ENCODE measurements at regions of chr11 and their contacts with region 1.

Region 1: DNA sequence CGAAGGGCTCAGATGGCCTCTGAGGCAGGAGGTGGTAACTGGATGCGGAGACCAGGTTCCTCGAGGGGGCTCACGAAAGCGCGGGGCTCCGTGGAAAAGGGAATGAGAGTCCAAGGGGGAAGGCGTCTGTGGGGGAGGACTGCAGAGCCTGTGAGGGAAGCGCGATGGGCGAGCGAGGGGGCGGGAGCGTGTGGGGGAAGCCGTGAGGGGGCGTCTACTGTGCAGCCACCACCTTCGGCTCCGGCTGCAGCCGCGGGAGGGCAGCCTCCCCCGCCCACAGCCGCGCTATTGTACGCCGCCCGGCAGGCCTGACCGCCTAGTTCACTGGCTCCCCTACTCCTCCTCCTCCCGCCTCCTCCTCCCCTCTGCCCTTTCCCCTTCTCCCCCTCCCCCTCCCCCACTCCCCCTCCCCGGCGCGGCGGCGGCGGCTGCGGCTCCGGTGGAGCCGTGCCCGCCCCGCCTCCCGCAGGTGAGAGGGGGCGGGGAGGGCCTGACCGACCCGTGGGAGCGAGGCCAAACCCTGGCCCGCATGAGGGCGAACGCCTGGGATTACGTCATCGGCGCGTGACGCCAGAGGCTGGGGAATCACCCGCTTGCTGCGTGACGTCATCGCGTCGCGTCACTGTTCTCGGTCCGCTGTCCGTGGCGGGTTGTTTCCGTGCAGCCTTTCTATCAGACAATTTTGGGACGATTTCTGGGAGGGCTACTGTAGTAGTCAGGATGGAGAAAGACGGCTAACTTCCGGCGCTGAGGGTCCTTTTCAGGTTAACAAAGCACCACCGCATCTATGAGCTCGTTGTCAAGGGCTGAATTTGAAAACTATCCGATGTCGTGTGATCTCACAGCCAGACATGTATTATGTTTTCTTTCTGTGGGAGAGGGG is at the start of gene PAK1:
- DNase-seq: peak; percentile 79 to 96 (median 85)
- ATAC-seq: peak; percentile 89
- H3K4me3 ChIP-seq: peak within 1 kb of the TSS; percentile 43
- H3K4me3 Mint-ChIP-seq: peak within 1 kb of the TSS; percentile 85 to 99 (median 92)
- H3K27ac ChIP-seq: peak within 1 kb of the TSS; percentile 75
- H3K27ac Mint-ChIP-seq: peak within 1 kb of the TSS; percentile 87 to 100 (median 96)
- H3K4me1 ChIP-seq: no peaks in the 10 kb centered on the region
- H3K4me1 Mint-ChIP-seq: peaks cover 12 to 29% (median 23%) of the 10 kb centered on the region in 7 donors
- H3K27me3 ChIP-seq: no peaks in the 10 kb centered on the region
- H3K27me3 Mint-ChIP-seq: peaks cover 0 to 37% (median 0%) of the 10 kb centered on the region in 5 donors
- total RNA-seq, gene PAK1: 18.9 to 67.2 (median 23.3) TPM

Region 2: DNA sequence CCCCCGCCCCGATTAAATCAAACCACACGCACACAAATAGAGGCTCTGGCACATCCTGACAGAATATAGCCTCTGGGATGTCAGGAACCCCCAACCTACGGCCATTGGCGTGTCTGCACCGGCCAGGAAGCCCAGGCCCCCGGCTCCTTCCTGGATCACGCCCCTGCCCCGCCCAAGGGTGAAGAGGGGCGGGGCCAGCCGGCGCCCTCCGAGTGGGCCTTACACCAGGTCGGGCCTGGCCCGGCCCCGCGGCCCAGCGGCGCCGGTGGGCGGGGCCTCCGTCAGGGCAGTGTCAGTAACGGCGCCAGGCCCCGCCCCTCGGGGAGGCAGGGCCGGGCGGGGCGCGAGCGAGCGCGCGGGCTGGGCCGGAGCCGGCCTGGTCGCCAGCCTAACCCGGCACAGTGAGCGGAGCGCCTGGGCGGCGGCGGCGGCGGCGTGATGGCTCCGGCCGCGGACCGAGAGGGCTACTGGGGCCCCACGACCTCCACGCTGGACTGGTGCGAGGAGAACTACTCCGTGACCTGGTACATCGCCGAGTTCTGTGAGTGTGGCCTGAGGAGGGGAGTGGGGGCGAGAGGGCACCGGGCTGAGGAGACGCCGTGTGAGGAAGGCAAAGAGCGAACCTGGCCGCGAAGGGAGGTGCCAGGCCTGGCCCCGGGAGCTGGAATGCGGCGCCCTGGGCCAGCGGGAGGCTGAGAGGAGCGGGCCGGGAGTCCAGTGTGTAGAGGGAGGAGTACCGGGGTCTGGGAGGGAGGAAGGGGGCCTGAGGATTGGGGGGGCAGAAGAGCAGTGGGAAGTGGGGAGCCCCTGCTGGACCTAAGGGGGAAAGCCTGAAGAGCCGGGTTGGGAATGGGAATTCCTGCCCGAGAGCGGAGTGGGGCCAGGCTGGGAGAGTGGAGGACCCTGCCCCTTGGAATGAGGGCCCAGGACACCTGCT is 613.2 kb before region 1 on chr11 and contains the start of gene ACER3:
- CTCF ChIA-PET with region 1: no interaction called
- POLR2A ChIA-PET with region 1: no interaction called
- intact Hi-C with region 1: loop called in 1 of 2 experiments (anchors 5 kb)
- DNase-seq: peak; percentile 36 to 95 (median 61)
- ATAC-seq: peak; percentile 98
- H3K4me3 ChIP-seq: peak within 1 kb of the TSS; percentile 57
- H3K4me3 Mint-ChIP-seq: peak within 1 kb of the TSS; percentile 80 to 92 (median 88)
- H3K27ac ChIP-seq: peak within 1 kb of the TSS; percentile 72
- H3K27ac Mint-ChIP-seq: peak within 1 kb of the TSS; percentile 73 to 95 (median 85)
- H3K4me1 ChIP-seq: peaks cover 9 to 11% of the 10 kb centered on the region in 2 donors
- H3K4me1 Mint-ChIP-seq: peaks cover 19 to 36% (median 28%) of the 10 kb centered on the region in 7 donors
- H3K27me3 ChIP-seq: no peaks in the 10 kb centered on the region
- H3K27me3 Mint-ChIP-seq: no peaks in the 10 kb centered on the region
- total RNA-seq, gene ACER3: 4.7 to 15.2 (median 9.0) TPM

Region 3: DNA sequence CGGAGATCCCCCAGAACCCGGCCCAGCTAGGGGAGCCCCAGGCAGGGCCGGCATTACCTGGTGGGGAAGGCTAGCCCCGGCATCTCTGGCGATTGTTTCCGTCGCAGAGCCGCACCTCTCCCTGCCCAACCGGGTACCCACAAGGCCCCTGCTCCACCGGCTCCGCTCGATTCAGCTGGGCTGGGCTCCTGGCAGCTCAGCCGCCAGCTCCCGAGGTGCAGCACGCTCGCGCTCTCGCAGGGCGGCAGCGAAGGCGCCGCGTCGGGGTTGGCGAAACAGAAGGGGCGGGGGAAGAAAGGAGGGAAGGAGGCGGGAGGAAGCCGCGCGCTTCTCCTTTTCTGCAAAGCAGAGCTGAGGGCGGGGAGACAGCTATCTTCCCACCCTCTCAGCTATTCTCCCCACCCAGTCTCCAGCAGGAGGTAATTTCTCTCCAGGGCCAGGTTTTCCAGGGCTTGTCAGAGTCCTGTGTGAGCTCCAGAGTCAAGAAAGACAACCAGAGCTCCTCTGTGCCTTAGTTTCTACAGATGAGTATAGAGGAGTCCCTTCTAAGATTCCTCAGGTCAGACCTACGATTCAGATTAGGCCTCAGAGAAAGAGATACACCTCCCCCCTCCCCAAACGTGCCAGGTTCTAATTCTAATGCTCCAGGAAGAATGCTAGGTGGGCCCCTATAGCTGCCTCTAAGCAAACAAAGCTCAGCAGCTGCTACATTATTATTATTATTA is 62.2 kb before region 1 on chr11:
- CTCF ChIA-PET with region 1: interaction called, 5 read pairs
- POLR2A ChIA-PET with region 1: interaction called, 5 read pairs
- intact Hi-C with region 1: loop called (anchors 1 kb)
- DNase-seq: peak; percentile 64 to 82 (median 78)
- ATAC-seq: peak; percentile 96
- H3K4me3 ChIP-seq: peak overlapping the region; percentile 88
- H3K4me3 Mint-ChIP-seq: peak overlapping the region; percentile 88 to 98 (median 94)
- H3K27ac ChIP-seq: peak overlapping the region; percentile 66
- H3K27ac Mint-ChIP-seq: peak overlapping the region; percentile 65 to 94 (median 82)
- H3K4me1 ChIP-seq: peaks cover 14 to 19% of the 10 kb centered on the region in 2 donors
- H3K4me1 Mint-ChIP-seq: peaks cover 33 to 54% (median 39%) of the 10 kb centered on the region in 7 donors
- H3K27me3 ChIP-seq: no peaks in the 10 kb centered on the region
- H3K27me3 Mint-ChIP-seq: no peaks in the 10 kb centered on the region

Region 4: GRCh38 chr11:77450227-77450626 is 23.8 kb before region 1 on chr11:
- CTCF ChIA-PET with region 1: interaction called, 6 read pairs
- POLR2A ChIA-PET with region 1: no interaction called
- intact Hi-C with region 1: loop called in 1 of 2 experiments (anchors 1 kb)
- DNase-seq: no peak
- ATAC-seq: no peak
- H3K4me3 ChIP-seq: no peak overlapping the region
- H3K4me3 Mint-ChIP-seq: no peak overlapping the region
- H3K27ac ChIP-seq: no peak overlapping the region
- H3K27ac Mint-ChIP-seq: no peak overlapping the region
- H3K4me1 ChIP-seq: peaks cover 0 to 9% of the 10 kb centered on the region in 2 donors
- H3K4me1 Mint-ChIP-seq: peaks cover 20 to 41% (median 34%) of the 10 kb centered on the region in 7 donors
- H3K27me3 ChIP-seq: no peaks in the 10 kb centered on the region
- H3K27me3 Mint-ChIP-seq: peaks cover 0 to 2% (median 0%) of the 10 kb centered on the region in 5 donors

Region 5: DNA sequence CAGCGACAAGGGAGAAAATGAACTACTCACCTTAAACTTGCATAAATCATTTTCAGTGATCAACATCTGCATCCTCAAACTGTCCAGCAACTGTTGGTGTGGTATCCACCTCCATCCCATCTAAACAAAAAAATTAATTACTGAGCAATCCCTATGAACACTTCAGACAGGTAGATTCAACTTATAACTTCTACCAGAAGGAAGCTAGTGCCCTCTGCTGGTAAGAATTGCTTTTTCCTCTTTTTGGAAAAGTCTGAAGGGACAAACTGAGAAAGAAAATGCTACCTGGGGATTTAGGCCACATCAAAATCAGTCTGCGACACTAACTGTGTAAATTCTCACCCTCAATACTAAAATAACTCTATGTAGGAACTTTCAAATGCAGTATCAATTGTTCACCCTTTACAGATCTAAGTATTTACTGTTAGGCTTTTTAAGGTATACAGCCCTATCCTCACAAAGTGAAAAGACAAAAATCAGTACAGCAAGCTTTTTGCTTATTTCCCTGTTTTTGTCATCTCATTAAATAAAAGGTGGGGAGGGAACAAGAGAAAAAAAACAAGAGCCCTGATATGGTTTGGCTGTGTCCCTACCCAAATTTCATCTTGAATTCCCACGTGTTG is 145.6 kb after region 1 on chr11:
- CTCF ChIA-PET with region 1: interaction called, 3 read pairs
- POLR2A ChIA-PET with region 1: no interaction called
- intact Hi-C with region 1: loop called in 1 of 2 experiments (anchors 5 kb)
- DNase-seq: peak in 7 of 9 donors; percentile 18 to 51 (median 41)
- ATAC-seq: peak; percentile 57
- H3K4me3 ChIP-seq: no peak overlapping the region
- H3K4me3 Mint-ChIP-seq: no peak overlapping the region
- H3K27ac ChIP-seq: no peak overlapping the region
- H3K27ac Mint-ChIP-seq: peak overlapping the region in 1 of 9 donors; percentile 75
- H3K4me1 ChIP-seq: no peaks in the 10 kb centered on the region
- H3K4me1 Mint-ChIP-seq: peaks cover 0 to 2% (median 0%) of the 10 kb centered on the region in 7 donors
- H3K27me3 ChIP-seq: no peaks in the 10 kb centered on the region
- H3K27me3 Mint-ChIP-seq: no peaks in the 10 kb centered on the region

Region 6: GRCh38 chr11:78574386-78575381 is 1100.6 kb after region 1 on chr11 and contains the start of gene NARS2:
- CTCF ChIA-PET with region 1: no interaction called
- POLR2A ChIA-PET with region 1: no interaction called
- intact Hi-C with region 1: loop called in 1 of 2 experiments (anchors 10 kb)
- DNase-seq: peak; percentile 89 to 97 (median 96)
- ATAC-seq: peak; percentile 99
- H3K4me3 ChIP-seq: peak within 1 kb of the TSS; percentile 70
- H3K4me3 Mint-ChIP-seq: peak within 1 kb of the TSS; percentile 93 to 100 (median 98)
- H3K27ac ChIP-seq: peak within 1 kb of the TSS; percentile 96
- H3K27ac Mint-ChIP-seq: peak within 1 kb of the TSS; percentile 86 to 99 (median 98)
- H3K4me1 ChIP-seq: peaks cover 7 to 21% of the 10 kb centered on the region in 2 donors
- H3K4me1 Mint-ChIP-seq: peaks cover 24 to 63% (median 50%) of the 10 kb centered on the region in 7 donors
- H3K27me3 ChIP-seq: no peaks in the 10 kb centered on the region
- H3K27me3 Mint-ChIP-seq: peaks cover 0 to 5% (median 0%) of the 10 kb centered on the region in 5 donors
- total RNA-seq, gene NARS2: 9.3 to 21.5 (median 19.7) TPM